CD4-positive, alpha-beta memory T cell (primary cell): ENCODE measurements at regions of chr2 and their contacts with region 1.

Region 1: GRCh38 chr2:96208143-96209010 is at the start of gene STARD7:
- DNase-seq: peak; percentile 94 to 96 (median 95)
- H3K4me3 ChIP-seq: peak within 1 kb of the TSS; percentile 45 to 62
- H3K4me3 Mint-ChIP-seq: peak within 1 kb of the TSS; percentile 88 to 98 (median 94)
- H3K27ac ChIP-seq: peak within 1 kb of the TSS; percentile 81
- H3K27ac Mint-ChIP-seq: peak within 1 kb of the TSS; percentile 92 to 96 (median 95)
- H3K4me1 ChIP-seq: peaks cover 53% of the 10 kb centered on the region
- H3K4me1 Mint-ChIP-seq: peaks cover 31 to 57% (median 51%) of the 10 kb centered on the region in 4 donors
- H3K27me3 ChIP-seq: no peaks in the 10 kb centered on the region
- H3K27me3 Mint-ChIP-seq: no peaks in the 10 kb centered on the region
- total RNA-seq, gene STARD7: 84.9 to 92.9 TPM

Region 2: DNA sequence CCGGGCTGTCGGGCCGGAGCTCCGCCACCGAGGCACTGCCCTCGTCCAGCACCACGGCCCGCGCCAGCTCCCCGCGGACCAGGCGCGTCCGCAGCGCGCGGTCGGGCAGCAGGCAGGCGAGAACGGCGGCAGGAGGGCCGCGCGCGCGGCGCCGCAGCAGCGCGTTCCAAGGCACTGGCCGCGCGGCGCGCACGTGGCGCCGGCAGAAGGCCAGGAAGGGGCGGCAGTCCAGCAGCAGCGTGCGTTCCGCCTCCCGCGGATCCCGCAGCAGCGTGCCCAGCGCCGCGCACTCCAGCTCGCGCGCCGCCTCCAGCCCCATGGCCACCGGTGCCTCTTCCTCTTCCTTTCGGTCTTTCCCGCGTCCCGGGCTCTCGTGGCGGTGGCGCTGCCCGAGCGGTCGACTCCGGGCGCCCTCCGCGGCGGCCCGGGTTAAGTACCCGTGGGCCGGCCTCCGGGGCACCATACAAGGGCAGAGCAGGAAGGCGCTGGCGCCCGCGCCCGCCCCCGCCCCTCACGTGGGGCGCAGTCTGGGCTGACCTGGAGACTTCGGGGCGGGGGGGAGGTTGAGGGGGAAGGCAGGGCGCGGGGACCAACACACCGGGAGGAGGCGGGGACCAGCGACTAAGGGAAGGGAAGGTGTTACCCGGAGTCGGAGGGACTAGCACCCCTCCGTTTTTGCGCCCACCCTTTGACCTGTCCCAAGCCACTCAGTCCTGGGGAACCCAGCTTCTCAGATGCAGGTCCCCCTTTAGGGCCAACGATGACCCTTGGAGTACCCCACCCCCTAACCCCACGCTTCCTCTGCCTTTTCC is 63.1 kb before region 1 on chr2 and contains the start of gene DUSP2:
- CTCF ChIA-PET with region 1: no interaction called
- POLR2A ChIA-PET with region 1: interaction called, 34 read pairs
- intact Hi-C with region 1: loop called (anchors 1 kb)
- DNase-seq: peak; percentile 86 to 92 (median 87)
- H3K4me3 ChIP-seq: peak within 1 kb of the TSS; percentile 71 to 86
- H3K4me3 Mint-ChIP-seq: peak within 1 kb of the TSS; percentile 93 to 96 (median 94)
- H3K27ac ChIP-seq: peak within 1 kb of the TSS; percentile 100
- H3K27ac Mint-ChIP-seq: peak within 1 kb of the TSS; percentile 98 to 100 (median 99)
- H3K4me1 ChIP-seq: peaks cover 62% of the 10 kb centered on the region
- H3K4me1 Mint-ChIP-seq: peaks cover 33 to 79% (median 57%) of the 10 kb centered on the region in 4 donors
- H3K27me3 ChIP-seq: no peaks in the 10 kb centered on the region
- H3K27me3 Mint-ChIP-seq: no peaks in the 10 kb centered on the region
- total RNA-seq, gene DUSP2: 33.4 to 34.6 TPM

Region 3: DNA sequence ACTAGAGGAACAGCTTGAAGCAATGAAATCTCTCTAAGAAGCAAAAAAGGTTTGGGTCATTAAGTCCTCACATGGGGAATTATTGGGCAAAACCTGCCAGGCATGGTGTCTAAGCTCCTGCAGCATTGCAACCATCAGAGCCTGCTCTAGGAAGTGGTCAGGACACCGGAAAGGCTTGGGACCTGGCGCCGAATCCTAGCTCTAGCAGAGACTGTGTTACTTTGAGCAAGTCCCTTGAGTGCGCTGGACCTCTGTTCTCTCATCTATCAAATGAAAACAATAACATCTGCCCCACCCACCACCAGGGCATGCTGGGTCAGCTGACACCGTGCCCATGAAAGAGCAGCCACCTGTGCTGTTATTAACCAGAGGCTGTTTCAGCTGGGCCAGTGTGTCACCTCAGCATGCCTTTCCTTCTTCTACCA is 51.1 kb after region 1 on chr2:
- CTCF ChIA-PET with region 1: interaction called, 4 read pairs
- POLR2A ChIA-PET with region 1: interaction called, 20 read pairs
- intact Hi-C with region 1: no loop called
- DNase-seq: no peak
- H3K4me3 ChIP-seq: no peak overlapping the region
- H3K4me3 Mint-ChIP-seq: peak overlapping the region in 2 of 8 donors; percentile 13 to 65
- H3K27ac ChIP-seq: no peak overlapping the region
- H3K27ac Mint-ChIP-seq: peak overlapping the region in 6 of 7 donors; percentile 15 to 79 (median 58)
- H3K4me1 ChIP-seq: peaks cover 69% of the 10 kb centered on the region
- H3K4me1 Mint-ChIP-seq: peaks cover 32 to 85% (median 63%) of the 10 kb centered on the region in 4 donors
- H3K27me3 ChIP-seq: no peaks in the 10 kb centered on the region
- H3K27me3 Mint-ChIP-seq: no peaks in the 10 kb centered on the region

Region 4: GRCh38 chr2:96305091-96305978 is 97.0 kb after region 1 on chr2 and contains the start of gene SNRNP200:
- CTCF ChIA-PET with region 1: no interaction called
- POLR2A ChIA-PET with region 1: interaction called, 16 read pairs
- intact Hi-C with region 1: loop called (anchors 5 kb)
- DNase-seq: peak; percentile 91 to 95 (median 91)
- H3K4me3 ChIP-seq: peak within 1 kb of the TSS; percentile 80 to 99
- H3K4me3 Mint-ChIP-seq: peak within 1 kb of the TSS; percentile 97 to 100 (median 99)
- H3K27ac ChIP-seq: peak within 1 kb of the TSS; percentile 89
- H3K27ac Mint-ChIP-seq: peak within 1 kb of the TSS; percentile 98 to 100 (median 100)
- H3K4me1 ChIP-seq: peaks cover 48% of the 10 kb centered on the region
- H3K4me1 Mint-ChIP-seq: peaks cover 44 to 65% (median 54%) of the 10 kb centered on the region in 4 donors
- H3K27me3 ChIP-seq: no peaks in the 10 kb centered on the region
- H3K27me3 Mint-ChIP-seq: no peaks in the 10 kb centered on the region
- total RNA-seq, gene SNRNP200: 225 to 227 TPM